ENCODE measurements at regions of chr10 and their contacts with region 1.

Region 1: DNA sequence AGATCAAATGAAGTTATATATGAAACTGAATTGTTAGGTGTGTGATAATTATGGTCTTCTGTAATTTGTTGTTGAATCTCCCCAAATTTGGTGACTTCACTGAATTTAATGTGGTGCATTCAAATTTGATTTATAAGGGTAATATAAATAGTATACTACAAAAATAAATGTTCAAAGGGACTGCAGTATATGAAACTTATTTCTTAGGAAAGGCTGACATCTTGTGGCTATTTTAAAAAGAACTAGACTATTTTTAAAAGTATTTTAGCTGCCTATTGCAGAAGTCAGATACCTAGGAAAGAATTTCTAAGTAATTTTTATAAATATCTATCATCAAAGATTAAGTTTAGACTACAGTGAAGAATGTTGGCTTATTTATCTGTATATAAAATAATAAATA is 36.6 kb downstream of the ATRNL1 start:
- DNase-seq: peak; percentile 46
- H3K4me3 ChIP-seq: no peak overlapping the region
- H3K27ac ChIP-seq: no peak overlapping the region
- H3K4me1 ChIP-seq: no peaks in the 10 kb centered on the region
- H3K27me3 ChIP-seq: no peaks in the 10 kb centered on the region
- CTCF ChIP-seq: no peak
- POLR2A ChIP-seq: no peak

Region 2: GRCh38 chr10:115082506-115082905 is 47.2 kb before region 1 on chr10:
- CTCF ChIA-PET with region 1: no interaction called
- POLR2A ChIA-PET with region 1: no interaction called
- dilution Hi-C with region 1: no loop called
- intact Hi-C with region 1: no loop called
- DNase-seq: peak; percentile 24
- H3K4me3 ChIP-seq: no peak overlapping the region
- H3K27ac ChIP-seq: no peak overlapping the region
- H3K4me1 ChIP-seq: no peaks in the 10 kb centered on the region
- H3K27me3 ChIP-seq: peaks cover 0 to 3% of the 10 kb centered on the region in 2 experiments
- CTCF ChIP-seq: no peak
- POLR2A ChIP-seq: no peak

Region 3: GRCh38 chr10:115141254-115141653 is 11.5 kb after region 1 on chr10:
- CTCF ChIA-PET with region 1: interaction called, 18 read pairs
- POLR2A ChIA-PET with region 1: no interaction called
- dilution Hi-C with region 1: no loop called
- intact Hi-C with region 1: no loop called
- DNase-seq: peak; percentile 13
- H3K4me3 ChIP-seq: no peak overlapping the region
- H3K27ac ChIP-seq: no peak overlapping the region
- H3K4me1 ChIP-seq: no peaks in the 10 kb centered on the region
- H3K27me3 ChIP-seq: no peaks in the 10 kb centered on the region
- CTCF ChIP-seq: peak in 1 of 2 donors; percentile 18
- POLR2A ChIP-seq: no peak

Measured in endothelial cell of umbilical vein (primary cell).